Mammary epithelial cell (primary cell): ENCODE measurements at regions of chr6 and their contacts with region 1.

Region 1: DNA sequence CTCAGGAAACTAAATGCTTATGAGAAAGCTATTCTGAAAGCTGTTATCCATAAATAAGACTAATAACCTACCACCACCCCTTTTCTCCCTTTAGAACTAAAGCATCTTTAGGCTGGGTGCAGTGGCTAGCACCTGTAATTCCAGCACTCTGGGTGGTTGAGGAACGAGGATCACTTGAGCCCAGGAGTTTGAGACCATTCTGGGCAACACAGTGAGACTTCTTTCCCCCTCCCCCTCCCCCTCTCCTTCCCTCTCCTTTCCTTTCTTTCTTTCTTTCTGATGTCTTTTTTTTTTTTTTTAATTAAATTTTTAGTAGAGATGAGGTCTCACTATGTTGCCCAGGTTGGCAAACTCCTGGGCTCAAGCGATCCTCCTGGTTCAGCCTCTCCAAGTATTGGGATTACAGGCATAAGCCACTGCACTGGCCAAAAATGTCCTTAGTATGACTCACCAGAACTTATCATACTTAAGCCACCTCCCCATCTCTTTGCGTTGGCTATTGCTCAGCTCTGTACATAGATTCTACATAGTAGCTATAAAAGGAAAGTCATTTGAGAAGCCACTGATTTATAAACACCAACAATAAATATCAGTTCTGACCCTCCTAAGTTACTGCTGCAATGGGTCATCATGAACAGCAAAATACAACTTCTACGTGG is 54.8 kb upstream of the SPDEF start:
- DNase-seq: peak; percentile 64
- H3K4me3 ChIP-seq: no peak overlapping the region
- H3K27ac ChIP-seq: no peak overlapping the region
- H3K4me1 ChIP-seq: peaks cover 3% of the 10 kb centered on the region
- H3K27me3 ChIP-seq: no peaks in the 10 kb centered on the region
- CTCF ChIP-seq: no peak

Region 2: DNA sequence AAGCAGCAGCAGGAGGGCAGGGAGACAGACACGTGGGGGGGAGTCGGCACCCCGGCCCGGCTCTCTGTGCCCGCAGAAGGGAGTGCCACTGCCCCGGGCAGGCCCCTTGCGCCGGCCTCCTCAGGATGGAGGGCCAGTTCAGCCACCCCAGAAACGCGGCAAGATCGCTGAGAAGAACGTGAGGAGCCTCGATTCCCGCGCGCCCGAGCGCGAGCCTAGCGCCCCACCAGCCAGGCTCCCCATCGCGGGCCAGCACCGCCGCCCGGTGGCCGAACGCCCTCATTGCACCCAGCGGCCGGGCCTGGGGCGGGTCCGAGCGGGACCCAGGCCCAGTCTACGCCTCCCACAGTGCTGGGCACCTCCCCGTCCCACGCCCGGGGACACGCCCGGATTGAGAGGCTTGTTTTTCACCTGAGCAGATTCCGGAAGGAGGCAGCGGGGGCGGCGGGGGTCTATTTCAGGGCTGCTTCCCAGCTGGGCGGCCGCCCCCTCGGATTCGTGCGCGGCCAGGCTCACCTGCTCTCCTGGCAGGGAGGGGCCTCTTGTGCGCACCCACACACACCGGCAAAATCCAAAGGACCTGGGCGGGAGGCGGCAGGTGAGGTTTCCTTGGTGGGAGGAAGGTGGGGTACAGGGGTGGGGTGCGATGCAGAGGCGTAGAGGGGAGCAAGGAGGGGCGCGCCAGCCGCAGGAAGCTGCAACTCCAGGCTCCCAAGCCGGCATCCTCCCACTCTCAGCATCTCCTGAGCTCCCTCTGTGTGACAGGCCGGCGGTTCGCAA is 456.1 kb before region 1 on chr6:
- CTCF ChIA-PET with region 1: no interaction called
- dilution Hi-C with region 1: no loop called
- in situ Hi-C with region 1: loop called in 1 of 2 experiments (anchors 25 kb)
- intact Hi-C with region 1: no loop called
- DNase-seq: no peak
- H3K4me3 ChIP-seq: peak overlapping the region in 1 of 3 experiments; percentile 34
- H3K27ac ChIP-seq: no peak overlapping the region
- H3K4me1 ChIP-seq: peaks cover 8% of the 10 kb centered on the region
- H3K27me3 ChIP-seq: peaks cover 5% of the 10 kb centered on the region
- CTCF ChIP-seq: peak; percentile 86 to 99

Region 3: DNA sequence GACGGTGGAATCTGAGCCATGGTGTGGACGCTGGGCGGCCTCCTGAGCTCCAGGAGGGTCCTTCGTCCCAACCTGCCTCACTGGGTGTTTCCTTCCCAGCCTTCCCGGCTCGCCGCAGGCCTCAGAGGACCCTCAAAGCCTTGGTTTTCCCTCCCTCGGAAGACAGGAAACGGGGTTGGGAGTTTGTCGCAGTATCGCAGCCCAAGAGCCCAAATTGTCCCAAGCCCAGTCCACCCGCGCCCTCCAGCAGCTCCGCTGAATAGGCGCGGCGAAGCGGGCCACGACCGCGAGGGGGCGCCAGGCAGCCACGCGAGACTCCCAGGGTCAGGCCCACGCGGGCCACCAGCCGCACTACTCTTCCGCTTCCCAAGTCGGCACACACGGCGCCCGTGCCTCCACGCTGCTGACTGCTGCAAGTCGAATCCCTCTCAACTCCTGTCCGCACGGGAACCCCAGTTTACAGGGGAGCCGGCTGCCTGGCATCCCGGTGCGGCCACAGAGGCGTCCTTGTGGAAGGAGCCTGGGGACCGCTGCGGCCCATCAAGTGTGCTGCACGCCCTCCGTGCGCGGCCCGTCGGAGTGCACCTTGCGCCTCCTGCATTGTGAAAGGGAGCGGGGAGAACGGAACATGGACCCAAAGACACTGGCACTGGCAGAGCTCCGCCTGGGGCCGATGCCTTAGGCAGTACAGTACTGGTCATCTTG is 414.7 kb before region 1 on chr6:
- CTCF ChIA-PET with region 1: no interaction called
- dilution Hi-C with region 1: no loop called
- in situ Hi-C with region 1: no loop called
- intact Hi-C with region 1: loop called (anchors 1 kb)
- DNase-seq: peak; percentile 45
- H3K4me3 ChIP-seq: peak overlapping the region; percentile 18 to 47 (median 40)
- H3K27ac ChIP-seq: no peak overlapping the region
- H3K4me1 ChIP-seq: peaks cover 11% of the 10 kb centered on the region
- H3K27me3 ChIP-seq: no peaks in the 10 kb centered on the region
- CTCF ChIP-seq: peak; percentile 71 to 98

Region 4: DNA sequence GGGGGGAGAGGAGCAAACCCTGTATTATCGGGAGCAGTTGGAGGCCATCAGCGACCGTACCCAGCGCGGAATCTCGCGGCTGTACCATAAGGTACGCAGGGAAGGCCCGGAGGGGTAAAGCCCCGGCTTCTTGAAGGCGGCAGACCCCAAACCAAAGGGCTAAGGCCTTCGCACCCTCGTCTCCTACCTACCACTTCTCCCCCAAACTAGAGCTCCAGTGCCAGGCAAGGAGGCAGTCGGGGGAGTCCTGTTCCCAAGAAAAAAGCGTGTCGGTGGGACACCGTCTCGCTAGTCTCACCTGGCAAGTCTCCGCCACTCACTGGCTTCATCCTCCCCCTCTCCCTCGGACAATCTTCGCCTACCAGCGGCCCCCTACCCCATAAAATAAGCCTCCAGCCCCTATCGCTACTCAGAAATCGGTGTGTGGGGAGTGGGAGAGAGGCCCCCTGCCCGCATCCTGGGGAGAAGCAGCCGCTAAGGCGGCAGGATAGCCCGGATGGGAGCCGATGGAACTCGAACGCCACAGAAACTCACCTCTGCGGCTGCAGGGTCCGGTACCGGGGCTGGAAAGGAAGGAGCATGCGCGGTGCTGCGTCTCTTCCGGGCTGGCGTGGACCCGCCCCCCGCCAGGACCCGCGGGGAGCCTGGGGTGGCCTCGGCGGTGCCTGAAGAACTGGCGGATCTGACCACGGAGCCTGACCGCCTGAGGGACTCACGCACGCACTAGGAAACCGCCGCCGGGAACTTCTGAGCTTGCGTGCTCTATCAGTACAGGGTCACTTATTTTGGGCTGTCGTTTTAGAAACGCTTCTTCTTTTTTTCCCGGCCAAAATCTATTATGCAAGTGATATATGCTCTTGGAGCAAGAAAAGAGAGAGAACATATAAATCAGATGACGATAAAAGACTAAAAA is 185.2 kb before region 1 on chr6 and contains the start of gene RPS10:
- CTCF ChIA-PET with region 1: no interaction called
- dilution Hi-C with region 1: no loop called
- in situ Hi-C with region 1: loop called in 1 of 2 experiments (anchors 25 kb)
- intact Hi-C with region 1: loop called (anchors 1 kb)
- DNase-seq: peak; percentile 85
- H3K4me3 ChIP-seq: peak within 1 kb of the TSS; percentile 74 to 96 (median 75)
- H3K27ac ChIP-seq: peak within 1 kb of the TSS; percentile 91
- H3K4me1 ChIP-seq: peaks cover 9% of the 10 kb centered on the region
- H3K27me3 ChIP-seq: no peaks in the 10 kb centered on the region
- CTCF ChIP-seq: no peak
- total RNA-seq, gene RPS10: 1,172 to 2,003 TPM

Region 5: DNA sequence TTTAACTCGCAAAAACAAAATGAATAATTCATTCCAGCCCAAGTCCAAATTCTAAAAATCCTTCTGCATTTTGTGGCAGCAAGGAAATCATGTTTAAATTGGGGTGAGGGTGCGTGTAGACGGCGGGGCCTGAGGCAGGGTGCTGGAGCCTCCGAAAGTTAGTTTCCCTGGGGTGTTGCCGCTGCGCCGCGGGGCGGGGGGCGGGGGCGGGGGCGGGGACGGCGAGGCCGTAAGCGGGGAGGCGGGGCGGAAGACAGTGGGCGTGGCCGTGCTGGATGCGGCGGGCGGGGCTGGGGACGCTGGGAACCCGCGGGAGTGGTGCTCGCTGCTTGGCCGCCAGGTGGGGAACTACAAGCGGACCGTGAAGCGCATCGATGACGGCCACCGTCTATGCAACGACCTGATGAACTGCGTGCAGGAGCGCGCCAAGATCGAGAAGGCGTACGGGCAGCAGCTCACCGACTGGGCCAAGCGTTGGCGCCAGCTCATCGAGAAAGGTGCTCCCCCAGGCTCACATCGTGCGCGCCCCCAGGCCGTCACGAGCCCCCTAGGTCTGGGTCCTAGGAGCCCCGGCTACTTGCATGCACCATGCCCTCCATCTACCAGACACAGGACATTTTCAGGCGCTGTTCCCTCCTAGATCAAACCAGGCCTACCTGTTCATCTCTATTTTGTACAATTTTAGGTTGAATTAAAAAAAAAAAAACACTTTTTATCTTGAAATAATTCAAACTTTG is 83.8 kb before region 1 on chr6:
- CTCF ChIA-PET with region 1: no interaction called
- dilution Hi-C with region 1: loop called (anchors 5 kb)
- in situ Hi-C with region 1: loop called in 1 of 2 experiments (anchors 5 kb)
- intact Hi-C with region 1: loop called (anchors 1 kb)
- DNase-seq: peak; percentile 82
- H3K4me3 ChIP-seq: peak overlapping the region in 2 of 3 experiments; percentile 13 to 30
- H3K27ac ChIP-seq: peak overlapping the region; percentile 19
- H3K4me1 ChIP-seq: peaks cover 9% of the 10 kb centered on the region
- H3K27me3 ChIP-seq: no peaks in the 10 kb centered on the region
- CTCF ChIP-seq: peak; percentile 38 to 70

Region 6: DNA sequence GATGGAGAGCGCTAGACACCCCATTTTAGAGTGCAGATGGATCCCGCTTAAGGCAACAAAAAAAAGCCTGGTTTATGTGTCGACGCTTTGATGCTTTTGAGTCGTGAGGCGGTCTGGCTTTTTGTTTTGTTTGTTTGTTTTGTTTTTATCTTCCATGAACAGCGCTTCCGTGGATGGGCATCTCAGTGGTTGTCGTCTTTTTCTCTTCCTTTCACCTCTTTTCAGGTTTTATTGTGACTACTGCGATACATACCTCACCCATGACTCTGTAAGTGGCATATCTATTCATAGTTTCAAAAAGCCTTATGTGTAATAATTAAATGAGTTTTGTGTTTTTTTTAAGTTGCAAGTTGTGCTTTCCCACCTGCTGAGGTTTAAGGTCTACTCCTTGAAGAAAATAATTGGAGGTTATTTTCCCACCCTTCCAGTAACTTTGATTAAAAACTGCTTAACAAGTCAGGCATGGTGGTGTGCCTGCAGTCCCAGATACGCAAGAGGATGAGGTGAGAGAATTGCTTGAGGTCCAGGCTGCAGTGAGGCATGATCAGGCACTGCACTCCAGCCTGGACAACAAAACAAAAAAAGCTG is 146.8 kb after region 1 on chr6:
- CTCF ChIA-PET with region 1: no interaction called
- dilution Hi-C with region 1: no loop called
- in situ Hi-C with region 1: no loop called
- intact Hi-C with region 1: loop called (anchors 1 kb)
- DNase-seq: no peak
- H3K4me3 ChIP-seq: peak overlapping the region; percentile 73 to 100 (median 100)
- H3K27ac ChIP-seq: peak overlapping the region; percentile 94
- H3K4me1 ChIP-seq: peaks cover 5% of the 10 kb centered on the region
- H3K27me3 ChIP-seq: no peaks in the 10 kb centered on the region
- CTCF ChIP-seq: no peak